CD14-positive monocyte (primary cell): ENCODE measurements at regions of chr1 and their contacts with region 1.

Region 1: DNA sequence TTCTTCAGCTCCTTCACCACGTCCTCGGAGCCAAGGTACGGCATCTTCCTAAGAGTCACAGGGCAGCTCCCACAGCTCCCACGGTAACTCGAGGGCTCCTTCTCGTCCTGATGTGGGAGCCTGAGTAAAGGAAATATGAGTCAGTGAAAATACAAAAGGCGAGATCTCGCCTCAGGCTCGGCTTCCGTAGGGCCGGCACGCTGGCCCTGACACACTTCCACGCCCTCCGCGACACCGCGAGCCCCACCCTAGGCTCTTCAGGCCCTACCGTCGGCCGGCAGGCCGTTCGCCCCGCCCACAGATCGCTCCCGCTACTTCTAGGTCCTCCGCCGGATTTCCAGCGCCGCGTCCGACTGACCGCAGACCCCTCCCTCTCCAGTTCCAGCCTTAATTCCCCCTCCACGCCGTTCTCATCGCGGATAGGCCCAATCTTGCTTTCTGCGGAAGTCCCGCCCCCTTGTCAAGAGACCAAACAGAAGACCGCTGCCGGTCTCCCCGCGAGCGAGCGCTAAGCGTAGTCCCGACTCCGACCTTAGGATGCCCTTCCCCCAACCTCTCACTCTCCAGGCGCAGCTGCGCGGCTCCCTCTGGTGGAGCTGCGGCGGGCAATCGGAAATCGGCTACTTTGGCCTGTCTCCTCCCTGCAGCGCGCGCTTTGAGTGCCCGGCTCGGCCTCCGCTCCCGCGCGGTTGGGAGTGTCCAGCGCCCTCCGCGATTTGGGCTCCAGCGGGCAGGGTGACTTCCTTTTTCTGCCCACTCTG is at the starts of genes AP4B1 and DCLRE1B:
- DNase-seq: peak; percentile 99 to 100 (median 100)
- H3K4me3 ChIP-seq: peak within 1 kb of the TSS; percentile 84 to 96 (median 85)
- H3K4me3 Mint-ChIP-seq: peak within 1 kb of the TSS; percentile 95 to 97
- H3K27ac ChIP-seq: peak within 1 kb of the TSS; percentile 92 to 96
- H3K27ac Mint-ChIP-seq: peak within 1 kb of the TSS; percentile 96 to 99 (median 99)
- H3K4me1 ChIP-seq: peaks cover 33 to 52% of the 10 kb centered on the region in 2 donors
- H3K4me1 Mint-ChIP-seq: peaks cover 66% of the 10 kb centered on the region
- H3K27me3 ChIP-seq: no peaks in the 10 kb centered on the region
- H3K27me3 Mint-ChIP-seq: peaks cover 0 to 2% (median 0%) of the 10 kb centered on the region in 3 donors
- CTCF ChIP-seq: peak; percentile 67
- polyA plus RNA-seq, gene AP4B1: 3.5 to 46.3 (median 6.1) TPM
- polyA plus RNA-seq, gene DCLRE1B: 3.0 to 5.7 (median 4.5) TPM

Region 2: GRCh38 chr1:113557177-113557576 is 347.7 kb before region 1 on chr1:
- intact Hi-C with region 1: no loop called
- DNase-seq: no peak
- H3K4me3 ChIP-seq: no peak overlapping the region
- H3K4me3 Mint-ChIP-seq: no peak overlapping the region
- H3K27ac ChIP-seq: no peak overlapping the region
- H3K27ac Mint-ChIP-seq: no peak overlapping the region
- H3K4me1 ChIP-seq: no peaks in the 10 kb centered on the region
- H3K4me1 Mint-ChIP-seq: no peaks in the 10 kb centered on the region
- H3K27me3 ChIP-seq: no peaks in the 10 kb centered on the region
- H3K27me3 Mint-ChIP-seq: peaks cover 0 to 3% (median 0%) of the 10 kb centered on the region in 3 donors
- CTCF ChIP-seq: no peak

Region 3: DNA sequence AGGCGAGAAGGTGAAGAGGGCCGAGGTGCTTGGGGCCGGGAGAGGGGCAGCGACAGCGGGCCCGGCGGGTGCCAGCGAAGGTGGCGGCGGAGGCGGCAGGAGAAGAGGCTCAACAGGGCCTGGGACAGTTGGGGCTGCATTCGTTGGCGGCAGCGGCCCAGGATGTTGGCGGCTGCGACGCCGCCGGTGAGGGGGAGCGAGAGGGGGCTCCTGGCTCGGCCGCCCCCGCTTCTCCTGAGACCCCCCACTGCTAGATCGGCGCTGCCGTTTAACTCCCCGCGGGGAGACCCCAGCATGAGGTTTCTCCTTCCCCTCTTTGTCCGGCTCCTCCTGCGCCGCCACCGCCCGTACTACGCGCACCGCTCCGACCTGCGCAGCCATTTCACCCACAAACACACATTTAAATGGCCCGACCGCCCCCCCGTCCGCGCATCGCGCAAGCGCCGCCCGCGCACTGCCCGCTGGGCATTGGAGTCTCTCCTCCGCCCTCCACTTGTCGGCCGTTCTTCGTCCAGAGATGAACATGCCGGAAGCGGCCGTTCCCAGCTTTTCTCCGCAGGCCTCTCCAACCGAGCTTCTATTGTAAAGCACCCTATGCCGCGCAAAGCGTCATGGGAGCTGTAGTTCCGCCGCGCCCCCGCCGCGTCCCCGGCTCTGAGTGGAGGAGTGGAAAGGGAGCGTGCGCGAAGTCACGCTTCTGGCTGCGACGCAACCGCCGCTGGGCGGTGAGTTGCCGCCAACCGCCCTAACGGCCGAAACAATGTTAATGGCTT is 92.8 kb before region 1 on chr1 and contains the start of gene RSBN1:
- intact Hi-C with region 1: loop called in 1 of 2 experiments (anchors 2 kb)
- DNase-seq: peak; percentile 98 to 99 (median 98)
- H3K4me3 ChIP-seq: peak within 1 kb of the TSS; percentile 74 to 94 (median 79)
- H3K4me3 Mint-ChIP-seq: peak within 1 kb of the TSS; percentile 95 to 98
- H3K27ac ChIP-seq: peak within 1 kb of the TSS; percentile 83 to 91
- H3K27ac Mint-ChIP-seq: peak within 1 kb of the TSS; percentile 88 to 97 (median 95)
- H3K4me1 ChIP-seq: peaks cover 31 to 39% of the 10 kb centered on the region in 2 donors
- H3K4me1 Mint-ChIP-seq: peaks cover 32% of the 10 kb centered on the region
- H3K27me3 ChIP-seq: no peaks in the 10 kb centered on the region
- H3K27me3 Mint-ChIP-seq: peaks cover 0 to 2% (median 1%) of the 10 kb centered on the region in 3 donors
- CTCF ChIP-seq: no peak
- polyA plus RNA-seq, gene RSBN1: 6.5 to 9.0 (median 8.9) TPM

Region 4: GRCh38 chr1:113835642-113836307 is 69.1 kb before region 1 on chr1:
- intact Hi-C with region 1: loop called (anchors 2 to 5 kb)
- DNase-seq: peak; percentile 34 to 68 (median 39)
- H3K4me3 ChIP-seq: no peak overlapping the region
- H3K4me3 Mint-ChIP-seq: no peak overlapping the region
- H3K27ac ChIP-seq: no peak overlapping the region
- H3K27ac Mint-ChIP-seq: no peak overlapping the region
- H3K4me1 ChIP-seq: no peaks in the 10 kb centered on the region
- H3K4me1 Mint-ChIP-seq: no peaks in the 10 kb centered on the region
- H3K27me3 ChIP-seq: no peaks in the 10 kb centered on the region
- H3K27me3 Mint-ChIP-seq: peaks cover 0 to 1% (median 0%) of the 10 kb centered on the region in 3 donors
- CTCF ChIP-seq: peak; percentile 83

Region 5: GRCh38 chr1:113859478-113860175 is 45.2 kb before region 1 on chr1:
- intact Hi-C with region 1: loop called (anchors 5 kb)
- DNase-seq: peak; percentile 48 to 63 (median 59)
- H3K4me3 ChIP-seq: peak overlapping the region; percentile 6 to 61 (median 24)
- H3K4me3 Mint-ChIP-seq: peak overlapping the region; percentile 27 to 76
- H3K27ac ChIP-seq: peak overlapping the region; percentile 44 to 73
- H3K27ac Mint-ChIP-seq: peak overlapping the region; percentile 79 to 93 (median 90)
- H3K4me1 ChIP-seq: peaks cover 71 to 87% of the 10 kb centered on the region in 2 donors
- H3K4me1 Mint-ChIP-seq: peaks cover 80% of the 10 kb centered on the region
- H3K27me3 ChIP-seq: no peaks in the 10 kb centered on the region
- H3K27me3 Mint-ChIP-seq: peaks cover 0 to 2% (median 0%) of the 10 kb centered on the region in 3 donors
- CTCF ChIP-seq: no peak

Region 6: GRCh38 chr1:113871597-113872113 is 33.2 kb before region 1 on chr1 and contains the start of gene PTPN22:
- intact Hi-C with region 1: loop called in 1 of 2 experiments (anchors 2 kb)
- DNase-seq: peak; percentile 88 to 92 (median 89)
- H3K4me3 ChIP-seq: peak within 1 kb of the TSS; percentile 44 to 83 (median 78)
- H3K4me3 Mint-ChIP-seq: peak within 1 kb of the TSS; percentile 69 to 76
- H3K27ac ChIP-seq: peak within 1 kb of the TSS; percentile 59 to 98
- H3K27ac Mint-ChIP-seq: peak within 1 kb of the TSS; percentile 95 to 99 (median 97)
- H3K4me1 ChIP-seq: peaks cover 62 to 83% of the 10 kb centered on the region in 2 donors
- H3K4me1 Mint-ChIP-seq: peaks cover 64% of the 10 kb centered on the region
- H3K27me3 ChIP-seq: no peaks in the 10 kb centered on the region
- H3K27me3 Mint-ChIP-seq: no peaks in the 10 kb centered on the region
- CTCF ChIP-seq: no peak
- polyA plus RNA-seq, gene PTPN22: 9.7 to 43.7 (median 29.7) TPM

Region 7: GRCh38 chr1:113928941-113929749 is 24.3 kb after region 1 on chr1 and contains the start of gene HIPK1:
- intact Hi-C with region 1: loop called (anchors 1 kb)
- DNase-seq: peak; percentile 86 to 87 (median 87)
- H3K4me3 ChIP-seq: peak within 1 kb of the TSS; percentile 70 to 99 (median 94)
- H3K4me3 Mint-ChIP-seq: peak within 1 kb of the TSS; percentile 96 to 99
- H3K27ac ChIP-seq: peak within 1 kb of the TSS; percentile 91 to 99
- H3K27ac Mint-ChIP-seq: peak within 1 kb of the TSS; percentile 99 to 100 (median 100)
- H3K4me1 ChIP-seq: peaks cover 45 to 52% of the 10 kb centered on the region in 2 donors
- H3K4me1 Mint-ChIP-seq: peaks cover 51% of the 10 kb centered on the region
- H3K27me3 ChIP-seq: no peaks in the 10 kb centered on the region
- H3K27me3 Mint-ChIP-seq: peaks cover 1 to 5% (median 2%) of the 10 kb centered on the region in 3 donors
- CTCF ChIP-seq: no peak
- polyA plus RNA-seq, gene HIPK1: 10.1 to 57.2 (median 14.8) TPM

Region 8: DNA sequence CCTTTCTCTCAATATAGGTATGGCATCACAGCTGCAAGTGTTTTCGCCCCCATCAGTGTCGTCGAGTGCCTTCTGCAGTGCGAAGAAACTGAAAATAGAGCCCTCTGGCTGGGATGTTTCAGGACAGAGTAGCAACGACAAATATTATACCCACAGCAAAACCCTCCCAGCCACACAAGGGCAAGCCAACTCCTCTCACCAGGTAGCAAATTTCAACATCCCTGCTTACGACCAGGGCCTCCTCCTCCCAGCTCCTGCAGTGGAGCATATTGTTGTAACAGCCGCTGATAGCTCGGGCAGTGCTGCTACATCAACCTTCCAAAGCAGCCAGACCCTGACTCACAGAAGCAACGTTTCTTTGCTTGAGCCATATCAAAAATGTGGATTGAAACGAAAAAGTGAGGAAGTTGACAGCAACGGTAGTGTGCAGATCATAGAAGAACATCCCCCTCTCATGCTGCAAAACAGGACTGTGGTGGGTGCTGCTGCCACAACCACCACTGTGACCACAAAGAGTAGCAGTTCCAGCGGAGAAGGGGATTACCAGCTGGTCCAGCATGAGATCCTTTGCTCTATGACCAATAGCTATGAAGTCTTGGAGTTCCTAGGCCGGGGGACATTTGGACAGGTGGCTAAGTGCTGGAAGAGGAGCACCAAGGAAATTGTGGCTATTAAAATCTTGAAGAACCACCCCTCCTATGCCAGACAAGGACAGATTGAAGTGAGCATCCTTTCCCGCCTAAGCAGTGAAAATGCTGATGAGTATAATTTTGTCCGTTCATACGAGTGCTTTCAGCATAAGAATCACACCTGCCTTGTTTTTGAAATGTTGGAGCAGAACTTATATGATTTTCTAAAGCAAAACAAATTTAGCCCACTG is 35.8 kb after region 1 on chr1:
- intact Hi-C with region 1: loop called in 1 of 2 experiments (anchors 5 kb)
- DNase-seq: peak; percentile 30 to 60 (median 35)
- H3K4me3 ChIP-seq: peak overlapping the region in 1 of 3 experiments; percentile 6
- H3K4me3 Mint-ChIP-seq: peak overlapping the region; percentile 61 to 70
- H3K27ac ChIP-seq: peak overlapping the region; percentile 55 to 71
- H3K27ac Mint-ChIP-seq: peak overlapping the region; percentile 73 to 92 (median 82)
- H3K4me1 ChIP-seq: peaks cover 61 to 82% of the 10 kb centered on the region in 2 donors
- H3K4me1 Mint-ChIP-seq: peaks cover 82% of the 10 kb centered on the region
- H3K27me3 ChIP-seq: no peaks in the 10 kb centered on the region
- H3K27me3 Mint-ChIP-seq: no peaks in the 10 kb centered on the region
- CTCF ChIP-seq: no peak